GM12878 (cell line): ENCODE measurements at regions of chr7 and their contacts with region 1.

Region 1: GRCh38 chr7:136687693-136688322 is 180.6 kb upstream of the CHRM2 start:
- DNase-seq: no peak
- ATAC-seq: peak; percentile 40; the same call in 2 of the 3 replicates
- H3K4me3 ChIP-seq: no peak overlapping the region
- H3K27ac ChIP-seq: no peak overlapping the region
- H3K4me1 ChIP-seq: no peaks in the 10 kb centered on the region
- H3K27me3 ChIP-seq: no peaks in the 10 kb centered on the region
- CTCF ChIP-seq: peak; percentile 49 to 61 (median 56)
- EP300 ChIP-seq: no peak
- POLR2A ChIP-seq: no peak
- RAD21 ChIP-seq: peak; percentile 50

Region 2: GRCh38 chr7:135801045-135801693 is 886.6 kb before region 1 on chr7:
- CTCF ChIA-PET with region 1: no interaction called
- POLR2A ChIA-PET with region 1: no interaction called
- RAD21 ChIA-PET with region 1: no interaction called
- SMC1A ChIA-PET with region 1: interaction called, 3 read pairs
- in situ Hi-C with region 1: no loop called
- intact Hi-C with region 1: loop called (anchors 2 kb)
- DNase-seq: peak; percentile 35
- ATAC-seq: peak; percentile 91
- H3K4me3 ChIP-seq: no peak overlapping the region
- H3K27ac ChIP-seq: no peak overlapping the region
- H3K4me1 ChIP-seq: no peaks in the 10 kb centered on the region
- H3K27me3 ChIP-seq: 0 out of 4 replicates have a peak, but pooled peaks cover 0 to 2% of the 10 kb centered on the region in 2 experiments
- CTCF ChIP-seq: peak; percentile 71 to 87 (median 86)
- EP300 ChIP-seq: no peak
- POLR2A ChIP-seq: no peak
- RAD21 ChIP-seq: peak; percentile 99

Region 3: DNA sequence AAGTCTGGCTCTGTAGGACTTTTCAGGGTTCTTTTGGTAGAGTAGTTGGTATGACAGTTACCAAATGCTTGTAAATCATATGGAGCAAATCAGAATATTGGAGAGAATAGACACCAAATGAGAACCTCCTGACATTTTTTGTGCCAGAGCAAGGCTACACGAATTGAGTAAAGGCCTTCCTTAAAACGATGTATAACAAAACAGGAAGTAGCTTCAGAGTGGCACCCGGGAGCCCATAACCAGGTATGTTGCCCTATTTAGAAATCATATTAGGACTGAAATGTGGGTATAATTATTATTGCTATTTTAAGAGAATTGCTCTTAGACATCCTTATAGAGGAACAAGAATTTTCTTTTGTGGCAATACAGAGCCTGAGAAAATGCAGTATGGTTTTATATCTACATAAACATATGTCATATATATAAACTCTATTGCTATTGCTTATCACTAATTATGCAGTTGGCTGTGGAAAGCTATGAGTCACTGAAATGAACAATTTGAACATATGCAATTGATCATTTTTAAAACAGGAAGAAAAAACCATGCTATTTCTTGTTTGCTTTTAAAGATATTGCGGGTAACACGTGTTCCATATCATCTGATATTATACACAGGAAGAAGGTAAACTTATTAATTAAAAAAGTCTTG is 513.2 kb before region 1 on chr7:
- CTCF ChIA-PET with region 1: no interaction called
- POLR2A ChIA-PET with region 1: no interaction called
- RAD21 ChIA-PET with region 1: no interaction called
- SMC1A ChIA-PET with region 1: no interaction called
- in situ Hi-C with region 1: no loop called
- intact Hi-C with region 1: no loop called
- DNase-seq: no peak
- ATAC-seq: no peak
- H3K4me3 ChIP-seq: no peak overlapping the region
- H3K27ac ChIP-seq: no peak overlapping the region
- H3K4me1 ChIP-seq: no peaks in the 10 kb centered on the region
- H3K27me3 ChIP-seq: no peaks in the 10 kb centered on the region
- CTCF ChIP-seq: no peak
- EP300 ChIP-seq: no peak
- POLR2A ChIP-seq: no peak
- RAD21 ChIP-seq: no peak

Region 4: DNA sequence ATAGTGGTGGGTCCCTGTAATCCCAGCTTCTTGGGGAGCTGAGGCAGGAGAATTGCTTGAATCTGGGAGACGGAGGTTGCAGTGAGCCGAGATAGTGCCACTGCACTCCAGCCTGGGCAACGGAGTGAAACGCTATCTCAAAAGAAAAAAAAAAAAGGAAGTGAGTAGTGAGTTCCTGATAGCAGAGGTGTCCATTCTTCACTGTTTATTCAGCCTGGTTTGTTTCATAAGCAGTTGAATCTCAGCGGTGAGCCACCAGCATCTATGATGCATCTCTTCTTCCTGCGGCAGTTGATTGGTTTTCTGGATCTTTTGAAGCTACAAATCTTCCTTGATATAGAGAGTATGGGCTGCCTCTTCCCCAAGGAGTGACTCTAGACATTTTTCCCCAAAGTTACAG is 394.5 kb before region 1 on chr7:
- CTCF ChIA-PET with region 1: no interaction called
- POLR2A ChIA-PET with region 1: no interaction called
- RAD21 ChIA-PET with region 1: no interaction called
- SMC1A ChIA-PET with region 1: interaction called, 3 read pairs
- in situ Hi-C with region 1: no loop called
- intact Hi-C with region 1: loop called (anchors 10 kb)
- DNase-seq: peak; percentile 16
- ATAC-seq: peak; percentile 96
- H3K4me3 ChIP-seq: no peak overlapping the region
- H3K27ac ChIP-seq: no peak overlapping the region
- H3K4me1 ChIP-seq: no peaks in the 10 kb centered on the region
- H3K27me3 ChIP-seq: no peaks in the 10 kb centered on the region
- CTCF ChIP-seq: no peak
- EP300 ChIP-seq: no peak
- POLR2A ChIP-seq: no peak
- RAD21 ChIP-seq: no peak

Region 5: DNA sequence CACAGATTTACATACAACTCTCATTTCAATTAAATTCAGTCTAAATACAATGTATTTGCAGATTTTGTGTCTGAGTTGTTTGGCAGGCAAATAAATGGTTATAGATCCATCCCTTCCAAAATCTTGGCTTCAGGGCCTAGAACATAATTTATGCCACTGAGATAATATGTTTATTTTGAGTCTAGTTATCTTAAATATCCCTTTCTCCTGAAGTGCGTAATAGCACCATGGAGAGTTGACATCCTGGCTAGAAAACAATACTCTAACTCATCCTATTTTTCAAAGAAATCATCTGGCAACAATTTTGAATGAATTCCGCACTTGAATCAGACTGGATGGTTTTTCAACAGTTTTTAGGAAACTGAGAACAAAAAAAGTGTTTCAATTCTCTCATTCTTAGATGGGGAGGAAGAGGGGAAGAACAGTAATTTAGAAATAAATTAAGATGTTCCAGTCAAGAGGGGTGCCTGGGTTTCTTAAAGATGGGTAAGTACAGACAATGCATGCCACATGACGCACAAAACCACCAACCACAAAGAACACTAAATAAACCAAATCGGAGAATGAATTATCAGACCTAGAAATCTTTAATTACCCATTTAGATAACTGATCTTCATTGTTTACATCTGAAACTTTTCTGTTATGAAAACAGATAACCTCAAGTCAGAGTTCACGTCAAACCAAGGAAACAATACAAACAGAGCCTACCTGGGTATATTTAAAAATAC is 884.4 kb after region 1 on chr7:
- CTCF ChIA-PET with region 1: no interaction called
- POLR2A ChIA-PET with region 1: no interaction called
- RAD21 ChIA-PET with region 1: no interaction called
- SMC1A ChIA-PET with region 1: no interaction called
- in situ Hi-C with region 1: no loop called
- intact Hi-C with region 1: no loop called
- DNase-seq: no peak
- ATAC-seq: peak; percentile 82
- H3K4me3 ChIP-seq: no peak overlapping the region
- H3K27ac ChIP-seq: no peak overlapping the region
- H3K4me1 ChIP-seq: no peaks in the 10 kb centered on the region
- H3K27me3 ChIP-seq: no peaks in the 10 kb centered on the region
- CTCF ChIP-seq: no peak
- EP300 ChIP-seq: peak; percentile 38 to 39; a peak in 2 of 4 replicates
- POLR2A ChIP-seq: no peak
- RAD21 ChIP-seq: no peak